Activated CD4-positive, alpha-beta T cell treated with anti-CD3 and anti-CD28 coated beads, Interleukin-2, amount 10 ng/mL, durations not matched to agents 24 days and 14 days (primary cell): ENCODE measurements at regions of chr7 and their contacts with region 1.

Region 1: GRCh38 chr7:7542251-7542835 is 6.7 kb upstream of the COL28A1 start:
- DNase-seq: no peak
- H3K4me3 Mint-ChIP-seq: no peak overlapping the region
- H3K27ac Mint-ChIP-seq: no peak overlapping the region
- H3K4me1 Mint-ChIP-seq: peaks cover 2% of the 10 kb centered on the region
- H3K27me3 Mint-ChIP-seq: peaks cover 23% of the 10 kb centered on the region

Region 2: GRCh38 chr7:7424151-7424873 is 118.0 kb before region 1 on chr7:
- intact Hi-C with region 1: loop called (anchors 5 kb)
- DNase-seq: peak; percentile 69
- H3K4me3 Mint-ChIP-seq: peak overlapping the region; percentile 68
- H3K27ac Mint-ChIP-seq: no peak overlapping the region
- H3K4me1 Mint-ChIP-seq: peaks cover 5% of the 10 kb centered on the region
- H3K27me3 Mint-ChIP-seq: peaks cover 5% of the 10 kb centered on the region

Region 3: DNA sequence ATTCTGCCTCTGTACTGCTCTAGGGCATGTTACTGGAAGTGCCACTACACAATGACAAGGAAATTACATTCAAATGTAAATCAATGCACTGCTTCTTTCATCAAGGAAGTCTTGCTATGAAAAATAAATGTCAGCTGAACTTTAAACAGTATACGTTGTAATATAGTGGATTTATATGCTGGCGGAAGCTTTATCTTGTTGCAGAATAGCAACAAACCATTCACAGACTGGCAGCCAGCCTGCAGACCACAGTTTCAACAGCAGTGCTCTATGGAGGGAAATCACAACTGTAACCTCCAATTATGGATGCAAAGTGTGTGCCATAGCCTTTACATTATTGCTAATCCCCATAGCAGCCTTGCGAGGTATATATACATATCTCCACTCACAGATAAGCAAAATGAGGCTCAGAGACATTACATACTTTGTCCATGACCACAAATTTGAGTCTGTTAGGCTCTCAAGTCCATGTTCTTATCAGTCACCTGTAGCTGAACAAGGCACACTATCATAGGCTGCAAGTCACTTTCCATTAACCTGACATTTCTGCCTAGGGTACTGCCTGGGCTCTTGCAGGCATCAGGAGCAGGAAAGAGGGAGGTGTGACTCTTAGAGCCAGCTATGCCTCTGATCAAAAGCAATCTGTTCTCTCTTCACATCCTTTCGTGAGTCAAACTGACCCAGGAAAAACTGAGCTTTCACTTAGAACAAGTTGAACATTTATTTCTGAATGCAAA is 29.3 kb before region 1 on chr7:
- intact Hi-C with region 1: no loop called
- DNase-seq: no peak
- H3K4me3 Mint-ChIP-seq: no peak overlapping the region
- H3K27ac Mint-ChIP-seq: no peak overlapping the region
- H3K4me1 Mint-ChIP-seq: no peaks in the 10 kb centered on the region
- H3K27me3 Mint-ChIP-seq: peaks cover 6% of the 10 kb centered on the region

Region 4: DNA sequence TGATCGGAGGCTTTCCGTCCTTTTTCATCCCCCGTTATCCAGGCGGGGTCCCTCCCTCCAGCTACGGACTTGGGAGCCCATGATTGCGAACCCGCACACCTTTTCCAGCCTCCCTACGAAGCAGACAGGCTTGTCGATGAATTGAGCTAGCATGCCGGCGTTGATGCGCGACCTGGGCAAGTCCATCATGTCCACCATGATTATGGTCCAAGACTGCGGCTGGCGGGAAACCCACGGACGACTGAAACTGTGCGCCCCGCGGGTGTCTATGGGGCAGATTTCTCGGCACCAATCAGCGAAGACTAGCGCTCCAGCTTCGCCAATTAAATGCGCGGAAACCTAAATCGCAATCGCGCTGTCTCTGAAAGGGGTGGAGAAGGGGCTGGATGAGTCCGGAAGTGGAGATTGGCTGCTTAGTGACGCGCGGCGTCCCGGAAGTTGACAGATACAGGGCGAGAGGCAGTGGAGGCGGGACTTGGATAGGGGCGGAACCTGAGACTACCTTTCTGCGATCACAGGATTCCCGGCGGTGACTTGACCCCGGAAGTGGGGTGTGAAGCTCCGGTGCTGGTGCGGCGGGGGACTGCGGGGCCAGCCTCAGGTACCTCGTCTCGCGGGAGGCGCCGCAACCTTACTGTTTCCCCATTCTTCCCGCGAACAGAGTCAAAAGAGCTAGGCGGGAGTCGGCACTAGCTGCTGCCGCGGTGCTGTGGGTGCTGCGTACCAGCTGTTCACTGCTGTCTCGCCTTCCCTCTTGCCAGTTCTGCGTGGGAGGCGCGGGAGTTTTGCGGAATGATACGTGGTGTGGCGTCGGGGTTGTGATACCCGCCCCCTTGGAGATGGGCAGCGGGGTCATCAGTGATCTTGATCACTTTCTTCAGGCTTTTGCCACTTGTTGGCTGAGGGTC is 98.1 kb after region 1 on chr7 and contains the start of gene UMAD1:
- intact Hi-C with region 1: no loop called
- DNase-seq: peak; percentile 99
- H3K4me3 Mint-ChIP-seq: peak within 1 kb of the TSS; percentile 97
- H3K27ac Mint-ChIP-seq: peak within 1 kb of the TSS; percentile 97
- H3K4me1 Mint-ChIP-seq: peaks cover 31% of the 10 kb centered on the region
- H3K27me3 Mint-ChIP-seq: no peaks in the 10 kb centered on the region
- total RNA-seq, gene UMAD1: 11.8 and 12.4 TPM in 2 replicates